ENCODE measurements at regions of chr13 and their contacts with region 1.

Region 1: GRCh38 chr13:110412132-110412914 is 105.2 kb downstream of the COL4A2 start:
- DNase-seq: peak; percentile 52
- H3K4me3 Mint-ChIP-seq: no peak overlapping the region
- H3K27ac Mint-ChIP-seq: peak overlapping the region; percentile 35
- H3K4me1 Mint-ChIP-seq: peaks cover 9% of the 10 kb centered on the region
- H3K27me3 Mint-ChIP-seq: peaks cover 45% of the 10 kb centered on the region

Region 2: DNA sequence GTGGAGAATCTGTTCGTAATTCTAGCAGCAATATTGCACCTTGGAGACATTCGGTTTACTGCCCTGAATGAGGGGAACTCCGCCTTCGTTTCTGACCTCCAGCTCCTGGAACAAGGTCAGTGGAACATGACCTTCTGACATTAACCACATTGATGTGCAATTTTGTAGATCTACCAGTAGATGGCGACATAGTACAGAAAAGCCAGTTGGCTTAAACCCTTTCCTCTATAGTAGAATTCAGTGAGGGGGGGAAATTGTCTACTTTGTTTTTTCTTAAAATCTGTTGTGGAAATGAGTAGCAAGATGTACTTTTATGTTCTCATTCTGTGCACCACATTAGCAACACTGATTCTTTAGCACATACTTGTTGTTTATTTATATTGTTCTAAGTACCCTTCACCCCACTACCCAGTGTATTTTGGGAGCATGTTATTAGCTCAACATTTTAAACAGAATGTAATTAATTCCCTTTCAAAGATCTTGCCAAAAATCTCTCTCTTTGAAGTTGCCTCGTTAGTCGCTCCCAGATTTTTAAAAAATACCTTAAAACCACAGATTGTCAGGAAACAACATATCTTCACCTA is 1450.7 kb before region 1 on chr13:
- intact Hi-C with region 1: loop called (anchors 1 kb)
- DNase-seq: no peak
- H3K4me3 Mint-ChIP-seq: no peak overlapping the region
- H3K27ac Mint-ChIP-seq: no peak overlapping the region
- H3K4me1 Mint-ChIP-seq: peaks cover 4% of the 10 kb centered on the region
- H3K27me3 Mint-ChIP-seq: peaks cover 4% of the 10 kb centered on the region

Region 3: GRCh38 chr13:110138010-110138699 is 274.2 kb before region 1 on chr13:
- intact Hi-C with region 1: loop called (anchors 2 kb)
- DNase-seq: peak; percentile 59
- H3K4me3 Mint-ChIP-seq: peak overlapping the region; percentile 73
- H3K27ac Mint-ChIP-seq: peak overlapping the region; percentile 73
- H3K4me1 Mint-ChIP-seq: peaks cover 10% of the 10 kb centered on the region
- H3K27me3 Mint-ChIP-seq: peaks cover 41% of the 10 kb centered on the region

Region 4: GRCh38 chr13:110306960-110307746 is 105.2 kb before region 1 on chr13 and contains the starts of genes COL4A1 and COL4A2:
- intact Hi-C with region 1: loop called (anchors 5 kb)
- DNase-seq: no peak
- H3K4me3 Mint-ChIP-seq: no peak within 1 kb of the TSS
- H3K27ac Mint-ChIP-seq: peak within 1 kb of the TSS; percentile 78
- H3K4me1 Mint-ChIP-seq: peaks cover 15% of the 10 kb centered on the region
- H3K27me3 Mint-ChIP-seq: peaks cover 74% of the 10 kb centered on the region
- total RNA-seq, gene COL4A1: not detected in 2 replicates
- total RNA-seq, gene COL4A2: 0.10 TPM in 1 of 2 replicates, not detected in the other